ENCODE measurements at regions of chr2 and their contacts with region 1.

Region 1: GRCh38 chr2:64988420-64989125 is 626 bp upstream of the SLC1A4 start:
- DNase-seq: peak; percentile 91
- ATAC-seq: peak; percentile 45
- H3K4me3 Mint-ChIP-seq: peak overlapping the region; percentile 75
- H3K27ac Mint-ChIP-seq: peak overlapping the region; percentile 78
- H3K4me1 Mint-ChIP-seq: peaks cover 75% of the 10 kb centered on the region
- H3K27me3 Mint-ChIP-seq: peaks cover 3% of the 10 kb centered on the region

Region 2: GRCh38 chr2:64945973-64946768 is 42.4 kb before region 1 on chr2:
- CTCF ChIA-PET with region 1: interaction called, 13 read pairs
- DNase-seq: peak; percentile 92
- ATAC-seq: peak; percentile 95
- H3K4me3 Mint-ChIP-seq: peak overlapping the region; percentile 69
- H3K27ac Mint-ChIP-seq: peak overlapping the region; percentile 95
- H3K4me1 Mint-ChIP-seq: peaks cover 58% of the 10 kb centered on the region
- H3K27me3 Mint-ChIP-seq: no peaks in the 10 kb centered on the region

Region 3: DNA sequence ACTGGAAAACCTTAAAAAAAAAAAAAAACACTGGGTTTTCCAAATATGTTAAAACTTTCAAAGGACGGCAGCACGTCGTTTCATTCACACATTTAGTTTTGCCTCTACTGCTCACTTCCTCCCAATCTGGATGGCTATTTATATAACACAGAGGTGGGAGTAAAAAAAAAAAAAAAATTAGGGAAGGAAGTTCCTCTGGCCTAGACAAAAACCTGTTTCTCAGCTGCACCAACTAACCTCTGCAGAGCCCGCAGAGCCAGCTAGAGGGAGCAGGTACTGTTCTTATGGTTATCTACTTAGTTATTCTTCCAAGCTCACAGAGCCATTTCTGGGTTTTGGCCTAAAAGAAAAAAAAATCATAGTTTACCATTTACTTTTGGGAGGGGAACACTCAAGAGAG is 28.8 kb after region 1 on chr2:
- CTCF ChIA-PET with region 1: no interaction called
- DNase-seq: no peak
- ATAC-seq: no peak
- H3K4me3 Mint-ChIP-seq: no peak overlapping the region
- H3K27ac Mint-ChIP-seq: no peak overlapping the region
- H3K4me1 Mint-ChIP-seq: peaks cover 15% of the 10 kb centered on the region
- H3K27me3 Mint-ChIP-seq: no peaks in the 10 kb centered on the region

Region 4: GRCh38 chr2:65092791-65093190 is 104.2 kb after region 1 on chr2:
- CTCF ChIA-PET with region 1: no interaction called
- DNase-seq: no peak
- ATAC-seq: no peak
- H3K4me3 Mint-ChIP-seq: no peak overlapping the region
- H3K27ac Mint-ChIP-seq: peak overlapping the region; percentile 24
- H3K4me1 Mint-ChIP-seq: peaks cover 3% of the 10 kb centered on the region
- H3K27me3 Mint-ChIP-seq: no peaks in the 10 kb centered on the region

Region 5: DNA sequence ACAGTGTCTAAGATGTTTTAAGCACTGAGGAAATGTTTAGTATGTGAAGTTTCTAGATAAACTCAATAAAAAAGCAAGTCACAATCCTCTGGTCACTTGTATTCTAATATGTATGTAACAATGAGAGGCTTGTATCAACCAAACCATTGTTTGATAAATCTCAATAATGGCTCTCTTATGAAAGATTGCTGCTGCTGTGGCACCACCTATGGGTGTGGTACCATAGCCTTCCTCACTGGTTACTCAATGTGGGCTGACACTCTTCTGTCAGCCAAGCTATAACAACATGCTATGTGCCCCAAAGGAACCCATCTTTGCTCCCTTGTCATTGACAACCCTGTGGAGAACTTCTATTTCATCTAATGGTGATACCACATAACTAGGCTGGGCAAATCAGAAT is 153.9 kb after region 1 on chr2:
- CTCF ChIA-PET with region 1: no interaction called
- DNase-seq: no peak
- ATAC-seq: peak; percentile 53
- H3K4me3 Mint-ChIP-seq: no peak overlapping the region
- H3K27ac Mint-ChIP-seq: no peak overlapping the region
- H3K4me1 Mint-ChIP-seq: peaks cover 5% of the 10 kb centered on the region
- H3K27me3 Mint-ChIP-seq: peaks cover 34% of the 10 kb centered on the region

Region 6: DNA sequence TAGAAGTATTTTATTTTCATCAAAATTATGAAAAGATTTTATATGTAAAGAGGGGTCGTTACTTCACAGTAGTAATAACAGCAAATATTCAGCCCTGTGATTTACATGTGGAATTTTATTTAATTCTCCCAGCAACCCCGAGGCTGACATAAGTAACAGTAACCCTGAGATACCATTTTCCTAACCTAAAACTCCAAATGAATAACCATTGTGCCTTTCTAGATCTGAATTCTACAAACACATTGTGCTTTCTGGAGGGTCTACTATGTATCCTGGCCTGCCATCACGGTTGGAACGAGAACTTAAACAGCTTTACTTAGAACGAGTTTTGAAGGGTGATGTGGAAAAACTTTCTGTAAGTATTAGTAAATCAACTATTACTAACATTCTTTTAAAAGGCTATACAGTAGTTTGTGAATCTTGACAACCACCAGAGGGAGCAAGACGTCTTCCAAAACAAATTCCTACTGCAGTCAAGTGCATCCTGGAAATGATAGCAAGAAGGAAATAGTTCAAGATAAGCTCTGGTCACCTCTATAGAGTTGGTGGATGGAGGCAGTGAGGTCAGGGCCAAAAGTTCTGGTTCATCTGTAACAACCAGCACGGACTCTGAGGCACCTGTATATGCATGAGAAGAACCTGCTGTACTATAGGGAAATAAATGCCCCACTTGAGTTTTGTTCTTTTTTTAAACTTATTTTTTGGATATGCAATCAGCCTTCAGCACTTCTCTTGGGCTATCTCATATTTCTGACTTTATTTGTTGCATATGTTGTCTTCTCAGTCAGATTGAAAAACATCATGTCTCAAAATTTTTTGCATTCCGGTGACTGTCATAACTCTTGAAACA is 276.5 kb after region 1 on chr2:
- CTCF ChIA-PET with region 1: no interaction called
- DNase-seq: no peak
- ATAC-seq: no peak
- H3K4me3 Mint-ChIP-seq: no peak overlapping the region
- H3K27ac Mint-ChIP-seq: no peak overlapping the region
- H3K4me1 Mint-ChIP-seq: no peaks in the 10 kb centered on the region
- H3K27me3 Mint-ChIP-seq: no peaks in the 10 kb centered on the region